ENCODE measurements at regions of chr16 and their contacts with region 1.

Region 1: DNA sequence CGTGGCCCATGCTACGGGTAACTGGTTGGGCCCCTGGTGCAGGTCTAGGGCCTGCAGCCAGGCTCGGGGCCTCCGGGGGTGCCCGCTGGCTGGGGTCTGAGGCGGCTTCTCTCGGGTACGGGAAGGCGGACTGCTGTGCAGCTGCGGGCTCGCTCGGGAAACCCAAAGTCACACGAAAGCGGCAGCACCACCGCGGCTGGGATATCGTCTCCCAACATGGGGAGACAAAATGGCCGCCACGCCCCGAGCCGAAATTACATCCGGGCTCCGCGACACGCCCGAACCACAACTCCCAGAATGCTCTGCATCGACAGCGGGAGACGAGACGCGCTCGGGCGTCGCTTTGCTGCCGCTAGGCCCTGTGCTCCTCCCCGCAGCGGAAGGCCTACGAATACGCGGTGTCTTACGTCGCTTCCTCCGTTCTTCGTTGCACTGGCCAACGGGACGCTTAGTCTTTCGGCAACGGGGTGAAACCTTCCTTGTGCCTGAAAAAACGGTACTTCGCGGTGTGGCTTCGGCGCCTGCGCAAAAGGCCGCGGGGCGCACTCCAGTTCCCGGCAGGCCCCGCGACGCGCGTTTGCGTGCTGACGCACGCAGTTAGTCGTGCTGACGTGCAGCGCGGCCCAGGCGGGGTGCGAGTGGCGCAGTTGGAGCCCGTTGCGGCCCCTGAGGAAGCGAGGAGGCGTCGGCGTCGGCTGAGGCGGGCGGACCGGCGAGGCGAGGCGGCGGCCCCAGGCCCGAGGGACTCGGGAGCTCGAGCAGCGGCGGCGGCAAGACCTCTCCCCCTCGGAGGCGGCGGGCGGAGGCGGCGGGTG is at the start of gene SRRM2:
- DNase-seq: peak; percentile 92 to 94
- ATAC-seq: peak; percentile 88 to 91
- H3K4me3 ChIP-seq: peak within 1 kb of the TSS; percentile 83 to 96 (median 88)
- H3K27ac ChIP-seq: peak within 1 kb of the TSS; percentile 90 to 100 (median 97)
- H3K4me1 ChIP-seq: peaks cover 40 to 46% of the 10 kb centered on the region in 2 donors
- H3K27me3 ChIP-seq: no peaks in the 10 kb centered on the region
- CTCF ChIP-seq: peak in 2 of 5 experiments; percentile 9 to 13
- POLR2A ChIP-seq: peak; percentile 98
- total RNA-seq, gene SRRM2: 151 to 205 (median 164) TPM

Region 2: GRCh38 chr16:2692948-2693651 is 59.1 kb before region 1 on chr16:
- in situ Hi-C with region 1: no loop called
- intact Hi-C with region 1: loop called (anchors 10 kb)
- DNase-seq: peak; percentile 24 to 79
- ATAC-seq: peak; percentile 59 to 60
- H3K4me3 ChIP-seq: peak overlapping the region in 3 of 4 donors; percentile 5 to 39 (median 17)
- H3K27ac ChIP-seq: peak overlapping the region; percentile 43 to 90 (median 79)
- H3K4me1 ChIP-seq: peaks cover 40% of the 10 kb centered on the region in 2 donors
- H3K27me3 ChIP-seq: no peaks in the 10 kb centered on the region
- CTCF ChIP-seq: no peak
- POLR2A ChIP-seq: peak in 1 of 2 donors; percentile 16

Region 3: DNA sequence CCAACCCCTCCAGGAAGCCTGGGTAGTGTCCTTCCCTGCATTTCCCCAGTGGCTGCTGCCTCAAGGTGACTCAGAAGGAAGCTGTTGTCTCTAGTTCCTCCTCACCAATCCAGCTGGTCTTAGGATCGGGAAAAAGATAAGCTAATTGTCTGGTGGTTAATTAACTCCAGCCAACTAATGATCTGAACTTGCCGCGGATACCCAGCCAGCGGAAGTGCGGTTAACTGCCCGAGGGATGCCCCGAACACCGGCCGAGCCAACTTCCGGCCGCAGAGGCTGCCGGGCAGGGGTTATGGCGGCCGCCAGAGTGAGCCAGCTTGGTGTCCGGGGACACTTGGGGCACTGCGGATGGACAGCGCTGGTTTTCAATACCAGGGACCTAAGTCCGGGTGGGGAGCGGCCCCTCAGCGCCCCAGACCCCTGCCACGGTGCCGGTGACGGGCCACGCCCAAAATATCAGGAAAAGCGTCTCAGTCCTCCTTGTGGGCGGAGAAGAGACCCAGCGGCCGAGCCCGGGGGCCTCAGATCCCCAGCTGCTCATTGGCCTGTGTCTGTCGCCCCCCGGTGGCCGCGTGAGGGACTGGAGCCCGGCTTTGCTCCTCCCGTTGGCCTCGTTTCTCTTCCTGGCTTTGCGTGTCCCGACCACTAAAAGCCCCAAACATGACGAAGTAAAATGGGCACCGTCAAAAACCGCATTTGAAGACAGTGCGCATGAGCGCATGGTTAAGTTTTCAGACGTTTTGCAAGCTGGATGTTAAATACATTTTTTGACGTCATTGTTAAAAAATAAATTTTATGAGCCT is 115.9 kb after region 1 on chr16:
- in situ Hi-C with region 1: no loop called
- intact Hi-C with region 1: loop called (anchors 1 kb)
- DNase-seq: peak; percentile 71 to 91
- ATAC-seq: peak; percentile 94
- H3K4me3 ChIP-seq: peak overlapping the region; percentile 71 to 79 (median 77)
- H3K27ac ChIP-seq: peak overlapping the region; percentile 87 to 93 (median 88)
- H3K4me1 ChIP-seq: peaks cover 8 to 10% of the 10 kb centered on the region in 2 donors
- H3K27me3 ChIP-seq: no peaks in the 10 kb centered on the region
- CTCF ChIP-seq: peak; percentile 95 to 98 (median 98)
- POLR2A ChIP-seq: peak; percentile 30 to 65

Region 4: GRCh38 chr16:2980227-2981086 is 228.2 kb after region 1 on chr16 and contains the start of gene PKMYT1:
- in situ Hi-C with region 1: no loop called
- intact Hi-C with region 1: loop called (anchors 1 kb)
- DNase-seq: peak; percentile 69 to 82
- ATAC-seq: peak; percentile 90 to 94
- H3K4me3 ChIP-seq: peak within 1 kb of the TSS; percentile 70 to 87 (median 82)
- H3K27ac ChIP-seq: peak within 1 kb of the TSS; percentile 76 to 89 (median 84)
- H3K4me1 ChIP-seq: peaks cover 15 to 19% of the 10 kb centered on the region in 2 donors
- H3K27me3 ChIP-seq: peaks cover 0 to 6% (median 3%) of the 10 kb centered on the region in 3 donors
- CTCF ChIP-seq: no peak
- POLR2A ChIP-seq: peak; percentile 73 to 88
- total RNA-seq, gene PKMYT1: 1.4 to 2.4 TPM in 2 of 4 donors, not detected in the others

Region 5: GRCh38 chr16:3234543-3235541 is 482.6 kb after region 1 on chr16 and contains the start of gene ZNF200:
- in situ Hi-C with region 1: no loop called
- intact Hi-C with region 1: loop called (anchors 5 kb)
- DNase-seq: peak; percentile 93 to 94
- ATAC-seq: peak; percentile 99 to 100
- H3K4me3 ChIP-seq: peak within 1 kb of the TSS; percentile 87 to 100 (median 99)
- H3K27ac ChIP-seq: peak within 1 kb of the TSS; percentile 96 to 100 (median 98)
- H3K4me1 ChIP-seq: peaks cover 12% of the 10 kb centered on the region in 2 donors
- H3K27me3 ChIP-seq: no peaks in the 10 kb centered on the region
- CTCF ChIP-seq: no peak
- POLR2A ChIP-seq: peak; percentile 60 to 72
- total RNA-seq, gene ZNF200: 0.49 to 3.2 (median 2.2) TPM